ENCODE measurements at regions of chr11 and their contacts with region 1.

Region 1: DNA sequence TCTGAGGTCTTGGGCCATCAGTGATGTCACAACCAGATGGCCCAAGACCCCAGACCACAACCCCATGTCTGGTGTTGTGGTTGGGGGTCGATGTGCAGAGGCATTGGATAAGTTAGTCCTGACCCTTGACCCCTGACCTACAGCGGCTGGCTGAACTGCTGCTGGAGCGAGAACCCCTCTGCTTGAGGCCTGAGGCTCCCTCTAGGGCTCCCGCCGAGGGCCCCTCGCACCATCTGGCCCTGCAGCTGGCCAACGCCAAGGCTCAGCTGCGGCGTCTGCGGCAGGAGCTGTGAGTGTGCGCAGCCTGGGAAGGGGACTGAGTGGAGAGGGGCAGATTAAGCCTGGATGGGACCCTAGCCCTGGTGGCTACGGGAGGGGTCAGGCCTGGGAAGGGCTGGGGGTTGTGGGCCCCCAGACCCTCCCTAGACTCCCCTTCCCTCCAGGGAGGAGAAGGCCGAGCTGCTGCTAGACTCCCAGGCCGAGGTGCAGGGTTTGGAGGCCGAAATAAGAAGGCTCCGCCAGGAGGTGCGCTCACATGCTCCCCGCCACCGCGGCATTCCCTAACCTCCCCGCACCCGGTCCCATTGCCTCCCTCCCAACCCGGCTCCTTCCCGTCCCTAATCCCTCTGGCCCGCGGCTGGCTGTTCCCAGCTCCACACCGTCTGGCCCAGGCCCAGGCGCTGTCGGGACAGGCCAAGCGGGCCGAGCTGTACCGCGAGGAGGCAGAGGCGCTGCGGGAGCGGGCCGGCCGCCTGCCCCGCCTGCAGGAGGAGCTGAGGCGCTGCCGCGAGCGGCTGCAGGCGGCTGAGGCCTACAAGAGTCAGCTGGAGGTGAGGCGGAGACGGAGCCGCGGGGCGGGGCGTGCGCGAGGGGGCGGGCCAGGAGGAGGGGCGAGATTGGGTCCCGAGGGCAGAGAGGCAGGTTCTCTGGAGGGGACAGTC is 2.1 kb downstream of the CCDC88B start:
- DNase-seq: peak; percentile 93
- H3K4me3 Mint-ChIP-seq: peak overlapping the region; percentile 84
- H3K27ac Mint-ChIP-seq: no peak overlapping the region
- H3K4me1 Mint-ChIP-seq: peaks cover 53% of the 10 kb centered on the region
- H3K27me3 Mint-ChIP-seq: no peaks in the 10 kb centered on the region

Region 2: DNA sequence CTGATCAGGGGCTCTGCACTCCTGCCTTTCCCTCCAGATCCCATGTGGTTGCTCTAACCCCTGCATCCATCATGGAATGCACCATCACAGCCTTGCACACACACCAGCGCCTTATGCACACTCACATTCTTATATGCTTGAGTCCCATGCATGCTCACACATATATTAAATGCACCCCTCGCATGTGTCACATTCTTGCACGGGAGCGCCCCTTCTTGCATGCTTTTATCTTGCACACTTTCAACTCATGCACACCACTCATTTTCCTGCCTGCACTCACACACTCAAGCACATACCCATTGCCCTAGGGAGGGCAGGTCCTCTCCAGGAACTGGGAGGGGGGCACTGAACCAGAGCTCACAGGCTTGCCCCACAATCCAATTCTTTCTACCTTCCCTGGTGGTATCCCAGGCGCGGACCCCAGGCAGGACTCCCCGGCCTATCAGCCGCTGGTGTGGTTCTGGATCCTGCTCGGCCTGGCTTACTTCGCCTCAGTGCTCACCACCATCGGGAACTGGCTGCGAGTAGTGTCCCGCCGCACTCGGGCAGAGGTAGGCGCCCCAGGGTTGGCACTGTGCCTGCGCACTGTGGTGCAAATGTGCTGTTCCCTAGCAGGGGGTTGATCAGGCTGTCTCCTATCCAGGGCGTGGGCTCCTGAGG is 44.3 kb before region 1 on chr11:
- CTCF ChIA-PET with region 1: no interaction called
- POLR2A ChIA-PET with region 1: no interaction called
- DNase-seq: no peak
- H3K4me3 Mint-ChIP-seq: no peak overlapping the region
- H3K27ac Mint-ChIP-seq: no peak overlapping the region
- H3K4me1 Mint-ChIP-seq: peaks cover 22% of the 10 kb centered on the region
- H3K27me3 Mint-ChIP-seq: peaks cover 79% of the 10 kb centered on the region

Region 3: DNA sequence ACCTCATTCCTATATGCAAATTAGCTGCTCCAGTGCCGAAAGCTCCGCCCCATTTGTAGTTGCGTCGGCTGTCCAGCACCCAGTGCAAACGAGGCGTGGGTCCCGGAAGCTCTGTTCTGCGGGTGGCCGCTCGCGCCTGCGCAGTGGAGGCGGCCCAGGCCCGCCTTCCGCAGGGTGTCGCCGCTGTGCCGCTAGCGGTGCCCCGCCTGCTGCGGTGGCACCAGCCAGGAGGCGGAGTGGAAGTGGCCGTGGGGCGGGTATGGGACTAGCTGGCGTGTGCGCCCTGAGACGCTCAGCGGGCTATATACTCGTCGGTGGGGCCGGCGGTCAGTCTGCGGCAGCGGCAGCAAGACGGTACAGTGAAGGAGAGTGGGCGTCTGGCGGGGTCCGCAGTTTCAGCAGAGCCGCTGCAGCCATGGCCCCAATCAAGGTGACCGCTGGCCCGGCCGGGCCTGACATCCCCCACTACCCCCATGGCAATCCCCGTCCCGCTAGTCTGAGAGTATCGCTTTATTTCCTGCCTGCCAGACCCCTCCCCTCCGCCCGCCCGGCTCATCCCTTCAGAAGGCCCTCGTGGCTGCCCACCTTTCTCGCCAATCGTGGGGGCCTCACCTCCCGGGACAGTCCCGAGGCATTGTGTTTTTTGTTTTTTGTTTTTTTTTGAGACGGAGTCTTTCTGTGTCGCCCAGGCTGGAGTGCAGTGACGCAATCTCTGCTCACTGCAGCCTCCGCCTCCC is 24.0 kb before region 1 on chr11 and contains the start of gene PRDX5:
- CTCF ChIA-PET with region 1: interaction called, 14 read pairs
- POLR2A ChIA-PET with region 1: no interaction called
- DNase-seq: peak; percentile 96
- H3K4me3 Mint-ChIP-seq: peak within 1 kb of the TSS; percentile 94
- H3K27ac Mint-ChIP-seq: peak within 1 kb of the TSS; percentile 99
- H3K4me1 Mint-ChIP-seq: peaks cover 36% of the 10 kb centered on the region
- H3K27me3 Mint-ChIP-seq: no peaks in the 10 kb centered on the region
- total RNA-seq, gene PRDX5: 97.4 to 106 TPM

Region 4: GRCh38 chr11:64358907-64359711 is 17.0 kb after region 1 on chr11 and contains the start of gene RPS6KA4:
- CTCF ChIA-PET with region 1: interaction called, 17 read pairs
- POLR2A ChIA-PET with region 1: no interaction called
- DNase-seq: peak; percentile 50
- H3K4me3 Mint-ChIP-seq: peak within 1 kb of the TSS; percentile 97
- H3K27ac Mint-ChIP-seq: peak within 1 kb of the TSS; percentile 87
- H3K4me1 Mint-ChIP-seq: peaks cover 48% of the 10 kb centered on the region
- H3K27me3 Mint-ChIP-seq: no peaks in the 10 kb centered on the region
- total RNA-seq, gene RPS6KA4: 31.0 to 43.0 TPM

Region 5: DNA sequence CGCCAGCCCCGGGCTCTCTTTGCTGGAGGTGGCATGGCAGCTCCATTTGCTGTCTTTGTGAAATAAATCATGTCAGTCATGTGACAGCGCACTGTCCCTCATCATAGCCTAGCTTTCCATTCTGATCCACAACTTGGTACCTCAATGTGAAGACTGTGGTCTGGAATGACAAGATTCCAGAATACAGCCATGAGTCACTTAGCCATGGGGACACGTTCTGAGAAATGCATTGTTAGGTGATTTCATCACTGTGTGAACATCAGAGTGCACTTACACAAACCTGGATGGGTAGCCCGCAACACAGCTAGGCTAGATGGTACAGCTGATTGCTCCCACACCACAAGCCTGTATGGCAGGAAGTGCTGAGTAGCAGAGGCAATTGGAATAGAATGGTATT is 44.2 kb after region 1 on chr11:
- CTCF ChIA-PET with region 1: no interaction called
- POLR2A ChIA-PET with region 1: no interaction called
- DNase-seq: no peak
- H3K4me3 Mint-ChIP-seq: no peak overlapping the region
- H3K27ac Mint-ChIP-seq: peak overlapping the region; percentile 60
- H3K4me1 Mint-ChIP-seq: peaks cover 20% of the 10 kb centered on the region
- H3K27me3 Mint-ChIP-seq: peaks cover 7% of the 10 kb centered on the region